Gastrocnemius medialis (tissue), 4 donors: ENCODE measurements at regions of chr1 and their contacts with region 1.

Region 1: DNA sequence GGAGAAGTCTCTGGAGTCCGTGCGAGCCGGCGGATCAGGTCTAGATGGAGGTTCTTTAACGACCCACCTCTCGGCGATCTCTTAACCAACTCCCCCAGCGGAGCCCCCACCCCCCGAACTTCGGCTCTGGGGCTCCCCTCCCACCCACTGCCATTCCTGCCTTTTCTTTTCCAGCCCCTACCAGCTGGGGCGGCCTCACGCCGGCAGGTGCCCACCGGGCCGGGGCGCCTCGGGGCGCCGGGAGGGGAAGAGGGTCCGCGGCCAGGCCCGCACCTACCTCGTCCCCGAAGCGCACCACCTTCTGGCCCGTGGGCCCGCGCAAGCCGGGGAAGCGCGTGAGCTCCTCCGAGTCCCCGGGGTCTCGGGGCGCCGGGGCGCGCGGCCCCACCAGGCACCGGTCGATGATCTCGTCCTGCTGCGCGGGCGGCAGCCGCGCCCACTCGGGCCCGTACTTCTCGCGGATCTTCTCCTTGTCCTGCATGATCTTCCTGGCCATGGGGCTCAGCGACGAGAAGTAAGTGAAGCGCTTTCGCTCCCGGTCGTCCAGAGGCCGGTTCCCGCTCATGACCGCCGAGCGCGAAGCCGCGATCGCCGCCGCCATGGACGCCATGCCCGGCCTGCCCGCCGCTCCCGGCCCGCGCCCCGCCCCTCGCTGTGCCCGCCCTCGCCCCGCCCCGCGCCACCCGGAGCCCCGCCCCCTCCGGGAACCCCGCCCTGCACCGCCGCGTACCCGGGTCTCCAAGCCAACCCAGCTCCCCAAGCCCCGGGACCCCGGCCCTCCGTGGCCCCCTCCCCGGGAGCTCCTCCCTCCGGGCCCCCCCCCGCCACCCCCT is at the start of gene C1orf198:
- DNase-seq: peak; percentile 70 to 73
- ATAC-seq: peak; percentile 71 to 75
- H3K4me3 ChIP-seq: peak within 1 kb of the TSS; percentile 83 to 97 (median 86)
- H3K27ac ChIP-seq: peak within 1 kb of the TSS; percentile 80 to 95 (median 89)
- H3K4me1 ChIP-seq: peaks cover 40 to 48% of the 10 kb centered on the region in 2 donors
- H3K27me3 ChIP-seq: no peaks in the 10 kb centered on the region
- CTCF ChIP-seq: no peak
- POLR2A ChIP-seq: peak; percentile 85 to 88
- total RNA-seq, gene C1orf198: 281 to 590 (median 339) TPM

Region 2: DNA sequence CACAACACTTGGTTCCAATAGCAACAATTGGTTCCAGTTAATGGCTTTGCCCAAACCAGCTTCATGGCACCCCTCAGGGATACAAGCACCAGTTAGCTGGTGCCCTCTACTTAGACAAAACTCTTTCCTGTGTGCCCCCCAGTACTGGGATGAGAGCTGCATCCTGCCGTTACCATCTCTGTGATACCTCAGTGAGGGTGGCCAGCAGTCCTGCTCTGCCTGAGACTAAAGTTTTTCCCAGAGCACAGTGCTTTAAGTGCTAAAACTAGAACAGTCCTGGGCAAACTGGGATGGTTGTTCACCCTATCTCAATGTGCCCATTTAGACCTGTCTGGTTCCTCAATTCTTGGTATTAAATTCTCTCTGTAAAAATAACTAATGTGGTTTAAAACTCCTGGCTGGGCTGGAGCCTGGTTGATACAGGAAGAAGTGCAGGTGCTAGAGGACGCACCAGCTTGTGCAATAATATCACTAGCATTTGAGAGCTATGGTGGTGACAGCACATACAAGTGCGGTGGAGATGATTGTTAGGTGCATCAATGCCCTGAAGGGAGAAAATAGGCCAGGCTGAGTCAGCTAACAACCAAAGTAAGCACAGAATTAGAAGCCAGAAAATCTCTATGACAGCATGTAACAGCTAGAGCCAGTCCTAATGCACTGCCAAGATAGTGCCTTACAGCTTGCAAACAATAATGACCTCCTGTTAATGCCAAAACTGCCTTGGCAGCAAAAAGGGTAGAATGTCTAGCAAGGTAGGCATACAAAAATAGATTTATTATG is 980.9 kb before region 1 on chr1:
- in situ Hi-C with region 1: no loop called
- intact Hi-C with region 1: loop called (anchors 10 kb)
- DNase-seq: peak; percentile 78 to 88
- ATAC-seq: peak; percentile 84 to 86
- H3K4me3 ChIP-seq: no peak overlapping the region
- H3K27ac ChIP-seq: peak overlapping the region; percentile 84 to 97 (median 95)
- H3K4me1 ChIP-seq: peaks cover 42 to 55% of the 10 kb centered on the region in 2 donors
- H3K27me3 ChIP-seq: no peaks in the 10 kb centered on the region
- CTCF ChIP-seq: no peak
- POLR2A ChIP-seq: no peak

Region 3: GRCh38 chr1:230642263-230642959 is 225.7 kb before region 1 on chr1 and contains the start of gene COG2:
- in situ Hi-C with region 1: no loop called
- intact Hi-C with region 1: loop called (anchors 5 kb)
- DNase-seq: peak; percentile 87 to 91
- ATAC-seq: peak; percentile 96 to 97
- H3K4me3 ChIP-seq: peak within 1 kb of the TSS; percentile 77 to 89 (median 78)
- H3K27ac ChIP-seq: peak within 1 kb of the TSS; percentile 85 to 94 (median 87)
- H3K4me1 ChIP-seq: peaks cover 21 to 24% of the 10 kb centered on the region in 2 donors
- H3K27me3 ChIP-seq: no peaks in the 10 kb centered on the region
- CTCF ChIP-seq: peak; percentile 98 to 100 (median 99)
- POLR2A ChIP-seq: peak; percentile 60 to 73
- total RNA-seq, gene COG2: 21.5 to 46.5 (median 27.4) TPM

Region 4: GRCh38 chr1:230713915-230714764 is 154.0 kb before region 1 on chr1 and contains the start of gene AGT:
- in situ Hi-C with region 1: no loop called
- intact Hi-C with region 1: loop called (anchors 5 kb)
- DNase-seq: peak; percentile 86 to 88
- ATAC-seq: peak; percentile 93 to 97
- H3K4me3 ChIP-seq: peak within 1 kb of the TSS; percentile 54 to 62 (median 56)
- H3K27ac ChIP-seq: peak within 1 kb of the TSS; percentile 87 to 92 (median 90)
- H3K4me1 ChIP-seq: peaks cover 23 to 30% of the 10 kb centered on the region in 2 donors
- H3K27me3 ChIP-seq: no peaks in the 10 kb centered on the region
- CTCF ChIP-seq: no peak
- POLR2A ChIP-seq: peak; percentile 59 to 69
- total RNA-seq, gene AGT: 17.3 to 49.6 (median 34.5) TPM

Region 5: DNA sequence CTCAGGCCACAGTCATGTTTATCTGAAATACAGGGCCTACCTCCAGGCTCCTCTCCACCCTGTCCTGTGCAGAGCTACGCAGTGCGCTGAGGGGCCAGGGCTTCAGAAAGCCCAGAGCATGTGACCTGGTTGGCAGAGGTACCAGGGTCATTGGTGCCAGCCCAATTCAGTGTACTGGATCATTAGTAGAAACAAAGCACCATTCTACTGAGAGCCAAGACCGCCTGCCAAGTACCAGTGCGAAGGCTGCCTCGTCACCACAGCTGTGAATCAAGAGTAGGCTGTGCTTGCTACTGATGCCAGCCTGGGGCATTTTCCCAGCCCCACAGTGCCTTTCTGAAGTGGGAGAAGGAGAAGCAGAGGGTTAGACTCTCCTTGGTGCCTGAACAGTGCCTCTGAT is 61.1 kb before region 1 on chr1:
- in situ Hi-C with region 1: no loop called
- intact Hi-C with region 1: loop called (anchors 2 kb)
- DNase-seq: peak; percentile 82 to 91
- ATAC-seq: peak; percentile 93 to 95
- H3K4me3 ChIP-seq: no peak overlapping the region
- H3K27ac ChIP-seq: peak overlapping the region; percentile 75 to 84 (median 80)
- H3K4me1 ChIP-seq: peaks cover 26 to 41% of the 10 kb centered on the region in 2 donors
- H3K27me3 ChIP-seq: no peaks in the 10 kb centered on the region
- CTCF ChIP-seq: no peak
- POLR2A ChIP-seq: peak in 1 of 2 donors; percentile 14

Region 6: DNA sequence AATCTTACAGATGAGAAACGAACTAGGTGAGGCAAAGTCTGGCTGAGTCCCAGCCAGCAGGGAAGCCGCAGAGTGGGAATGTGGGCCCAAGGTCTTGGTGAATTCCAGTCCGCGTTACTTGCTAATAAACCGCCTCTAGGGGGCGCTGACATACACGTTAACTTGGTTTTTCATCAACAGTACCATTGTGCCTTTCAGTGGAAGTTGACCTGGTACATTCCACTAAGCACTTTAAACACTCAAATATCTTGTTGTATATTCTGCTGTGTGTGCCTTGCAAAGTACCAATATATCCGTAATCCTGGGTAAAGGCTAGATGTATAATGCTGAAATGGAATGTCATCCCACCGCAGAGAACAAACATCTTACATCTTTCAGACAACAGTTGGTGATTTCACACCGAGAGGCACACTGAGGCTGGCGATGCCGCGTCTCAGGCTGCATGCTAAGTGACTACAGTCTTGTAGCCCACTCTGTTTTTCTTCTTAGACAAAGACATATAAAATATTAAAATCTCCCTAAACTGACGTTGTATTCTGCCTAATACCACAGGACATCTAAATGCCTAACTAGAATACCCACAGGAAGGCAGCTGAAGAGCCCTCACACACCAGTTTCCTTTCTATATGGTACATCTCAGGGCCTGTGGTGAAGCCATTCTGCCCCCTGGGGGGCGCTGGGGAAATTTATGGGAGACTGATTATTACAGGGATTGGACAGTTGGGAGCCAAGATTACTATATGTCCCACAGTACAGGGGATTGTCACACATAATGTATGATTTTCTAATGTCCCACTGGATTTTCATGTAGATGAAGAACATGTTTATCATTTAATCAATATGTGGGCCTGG is 49.4 kb after region 1 on chr1:
- in situ Hi-C with region 1: no loop called
- intact Hi-C with region 1: loop called (anchors 5 kb)
- DNase-seq: peak; percentile 19 to 48
- ATAC-seq: peak; percentile 70 to 81
- H3K4me3 ChIP-seq: no peak overlapping the region
- H3K27ac ChIP-seq: no peak overlapping the region
- H3K4me1 ChIP-seq: no peaks in the 10 kb centered on the region
- H3K27me3 ChIP-seq: no peaks in the 10 kb centered on the region
- CTCF ChIP-seq: peak; percentile 42 to 63 (median 51)
- POLR2A ChIP-seq: no peak

Region 7: GRCh38 chr1:230978491-230979388 is 110.6 kb after region 1 on chr1 and contains the starts of genes ARV1 and TTC13:
- in situ Hi-C with region 1: no loop called
- intact Hi-C with region 1: loop called (anchors 2 kb)
- DNase-seq: peak; percentile 98
- ATAC-seq: peak; percentile 96 to 97
- H3K4me3 ChIP-seq: peak within 1 kb of the TSS; percentile 84 to 96 (median 88)
- H3K27ac ChIP-seq: peak within 1 kb of the TSS; percentile 71 to 82 (median 78)
- H3K4me1 ChIP-seq: peaks cover 17 to 24% of the 10 kb centered on the region in 2 donors
- H3K27me3 ChIP-seq: no peaks in the 10 kb centered on the region
- CTCF ChIP-seq: peak in 4 of 5 experiments; percentile 8 to 29 (median 23)
- POLR2A ChIP-seq: peak; percentile 48 to 56
- total RNA-seq, gene ARV1: 7.9 to 21.3 (median 10.5) TPM
- total RNA-seq, gene TTC13: 16.0 to 36.0 (median 22.7) TPM